ENCODE measurements at regions of chrX and their contacts with region 1.

Region 1: DNA sequence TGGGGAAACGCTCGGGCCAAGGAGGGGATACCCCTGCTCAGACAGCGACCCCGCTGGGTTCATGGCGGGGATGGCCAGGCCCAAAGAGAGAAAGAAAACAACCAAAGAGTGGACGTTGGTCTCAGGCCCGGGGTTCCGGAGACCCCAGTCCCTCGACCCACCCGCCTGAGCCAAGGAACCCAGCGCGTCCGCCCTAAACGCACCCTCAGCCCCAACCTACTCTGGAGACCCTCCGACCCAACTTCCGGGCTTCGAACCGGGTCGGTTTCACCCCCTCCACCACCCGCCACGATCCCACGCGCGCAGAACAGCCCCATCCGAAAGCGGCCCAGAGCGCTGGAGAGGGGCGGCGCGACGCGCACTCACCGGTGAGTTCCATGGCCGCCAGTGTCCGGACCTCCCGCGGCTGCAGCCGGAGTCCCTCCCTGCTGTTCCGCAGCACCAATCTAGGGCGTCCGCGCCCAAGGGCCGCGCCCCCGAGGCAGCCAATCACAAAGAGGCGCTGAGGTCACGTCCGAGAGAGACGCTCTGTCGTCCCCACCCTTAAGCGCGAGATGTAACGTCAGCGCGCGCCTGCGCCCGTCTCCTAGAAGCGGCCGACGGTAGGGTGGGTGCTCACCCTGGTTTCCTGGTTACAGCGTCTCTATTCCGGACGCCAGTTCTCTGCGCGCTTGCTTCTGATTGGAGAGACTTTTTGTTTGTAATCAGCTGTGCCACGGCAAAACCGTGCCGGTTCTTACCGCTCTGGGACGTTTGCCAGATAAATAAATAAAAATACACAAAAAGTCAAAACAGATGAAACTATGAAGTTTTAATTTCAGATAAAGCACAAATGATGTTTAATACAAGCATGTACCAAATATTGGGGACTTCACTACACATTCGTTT is at the start of gene PIGA:
- DNase-seq: peak; percentile 94
- H3K4me3 Mint-ChIP-seq: peak within 1 kb of the TSS; percentile 89
- H3K27ac Mint-ChIP-seq: peak within 1 kb of the TSS; percentile 87
- H3K4me1 Mint-ChIP-seq: peaks cover 12% of the 10 kb centered on the region
- H3K27me3 Mint-ChIP-seq: no peaks in the 10 kb centered on the region
- total RNA-seq, gene PIGA: 26.8 to 28.4 TPM

Region 2: GRCh38 chrX:14872851-14873675 is 462.3 kb before region 1 on chrX and contains the starts of genes FANCB and MOSPD2:
- CTCF ChIA-PET with region 1: no interaction called
- intact Hi-C with region 1: loop called (anchors 1 kb)
- DNase-seq: peak; percentile 95
- H3K4me3 Mint-ChIP-seq: peak within 1 kb of the TSS; percentile 77
- H3K27ac Mint-ChIP-seq: peak within 1 kb of the TSS; percentile 75
- H3K4me1 Mint-ChIP-seq: peaks cover 26% of the 10 kb centered on the region
- H3K27me3 Mint-ChIP-seq: no peaks in the 10 kb centered on the region
- total RNA-seq, gene FANCB: 16.5 to 17.9 TPM
- total RNA-seq, gene MOSPD2: 16.0 to 16.1 TPM

Region 3: GRCh38 chrX:15299941-15300851 is 35.2 kb before region 1 on chrX:
- CTCF ChIA-PET with region 1: interaction called, 3 read pairs
- intact Hi-C with region 1: loop called (anchors 1 kb)
- DNase-seq: no peak
- H3K4me3 Mint-ChIP-seq: no peak overlapping the region
- H3K27ac Mint-ChIP-seq: no peak overlapping the region
- H3K4me1 Mint-ChIP-seq: no peaks in the 10 kb centered on the region
- H3K27me3 Mint-ChIP-seq: no peaks in the 10 kb centered on the region

Region 4: DNA sequence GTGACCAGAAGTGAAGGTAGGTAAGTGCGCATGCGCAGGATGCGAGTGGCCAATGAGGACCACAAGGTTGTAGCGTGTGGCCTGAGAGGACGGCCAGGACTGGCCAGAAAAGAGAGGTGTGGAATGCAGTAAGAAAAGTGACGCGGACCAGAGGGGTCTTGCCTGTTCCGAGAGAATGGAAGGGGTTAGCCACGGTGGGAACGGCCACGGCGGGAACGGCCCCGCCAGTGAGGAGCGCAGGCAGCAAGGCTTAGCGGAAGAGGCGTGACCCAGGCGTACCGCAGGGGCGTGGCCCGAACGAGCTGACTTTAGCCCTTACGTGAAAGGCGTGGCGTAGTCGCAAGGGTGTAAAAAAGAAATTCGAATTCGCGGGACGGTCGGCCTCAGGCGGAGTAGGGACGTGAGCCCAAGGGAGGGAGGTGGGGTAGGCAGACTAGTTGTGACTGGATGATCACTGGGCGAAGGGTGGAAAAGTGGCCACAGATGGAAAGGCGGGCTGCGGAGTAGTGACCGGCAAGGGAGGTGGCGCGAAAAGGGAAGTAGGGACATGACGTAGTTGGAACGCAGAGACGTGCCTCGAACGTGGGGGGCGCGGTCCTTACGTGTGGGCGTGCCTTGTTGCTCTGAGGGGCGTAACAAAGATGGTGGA is 339.6 kb after region 1 on chrX:
- CTCF ChIA-PET with region 1: no interaction called
- intact Hi-C with region 1: loop called (anchors 1 kb)
- DNase-seq: peak; percentile 85
- H3K4me3 Mint-ChIP-seq: no peak overlapping the region
- H3K27ac Mint-ChIP-seq: no peak overlapping the region
- H3K4me1 Mint-ChIP-seq: peaks cover 21% of the 10 kb centered on the region
- H3K27me3 Mint-ChIP-seq: no peaks in the 10 kb centered on the region

Region 5: DNA sequence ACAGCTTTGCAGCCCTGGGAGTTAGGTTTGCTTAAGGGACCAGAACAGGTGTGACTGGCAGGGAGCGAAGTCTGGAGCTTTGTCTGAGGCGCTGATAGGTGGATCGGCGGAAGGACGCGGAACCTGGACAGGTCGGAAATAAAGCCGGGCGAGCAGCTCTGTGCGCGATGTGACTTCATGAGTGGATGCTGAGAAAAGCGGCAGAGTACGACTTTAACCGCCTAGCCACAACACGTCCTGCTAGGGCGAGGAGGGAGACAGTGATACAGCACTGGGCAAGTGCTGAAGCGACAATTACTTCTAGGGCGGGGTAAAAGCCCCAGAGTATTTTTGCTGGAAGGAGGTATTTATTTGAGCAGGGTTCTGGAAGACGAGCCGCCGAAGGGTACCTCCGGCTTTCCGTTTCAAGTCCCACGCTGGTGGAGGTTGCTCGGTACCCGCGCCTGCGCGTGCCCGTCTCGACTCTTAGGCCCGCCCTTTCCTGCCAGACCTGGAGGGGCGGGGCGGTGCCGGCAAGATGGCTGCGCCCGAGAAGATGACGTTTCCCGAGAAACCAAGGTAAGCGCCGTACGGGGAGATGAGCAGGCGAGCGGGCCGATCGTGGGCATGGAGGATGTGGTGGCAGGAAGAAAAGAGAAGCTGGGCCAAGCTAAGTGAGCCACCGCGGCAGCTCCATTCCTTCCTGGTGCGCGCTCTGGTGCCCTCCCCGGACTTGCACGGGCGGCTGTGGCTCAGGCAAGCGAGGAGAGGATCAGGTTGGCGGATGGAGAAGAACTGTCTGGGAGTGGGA is 454.8 kb after region 1 on chrX and contains the start of gene ZRSR2:
- CTCF ChIA-PET with region 1: no interaction called
- intact Hi-C with region 1: loop called (anchors 2 kb)
- DNase-seq: peak; percentile 88
- H3K4me3 Mint-ChIP-seq: no peak within 1 kb of the TSS
- H3K27ac Mint-ChIP-seq: no peak within 1 kb of the TSS
- H3K4me1 Mint-ChIP-seq: peaks cover 16% of the 10 kb centered on the region
- H3K27me3 Mint-ChIP-seq: no peaks in the 10 kb centered on the region
- total RNA-seq, gene ZRSR2: 15.7 to 16.7 TPM

Region 6: GRCh38 chrX:16946361-16946964 is 1611.1 kb after region 1 on chrX and contains the start of gene REPS2:
- CTCF ChIA-PET with region 1: no interaction called
- intact Hi-C with region 1: loop called (anchors 5 kb)
- DNase-seq: peak; percentile 83
- H3K4me3 Mint-ChIP-seq: peak within 1 kb of the TSS; percentile 71
- H3K27ac Mint-ChIP-seq: no peak within 1 kb of the TSS
- H3K4me1 Mint-ChIP-seq: peaks cover 2% of the 10 kb centered on the region
- H3K27me3 Mint-ChIP-seq: no peaks in the 10 kb centered on the region
- total RNA-seq, gene REPS2: not detected